ENCODE measurements at regions of chr12 and their contacts with region 1.

Region 1: DNA sequence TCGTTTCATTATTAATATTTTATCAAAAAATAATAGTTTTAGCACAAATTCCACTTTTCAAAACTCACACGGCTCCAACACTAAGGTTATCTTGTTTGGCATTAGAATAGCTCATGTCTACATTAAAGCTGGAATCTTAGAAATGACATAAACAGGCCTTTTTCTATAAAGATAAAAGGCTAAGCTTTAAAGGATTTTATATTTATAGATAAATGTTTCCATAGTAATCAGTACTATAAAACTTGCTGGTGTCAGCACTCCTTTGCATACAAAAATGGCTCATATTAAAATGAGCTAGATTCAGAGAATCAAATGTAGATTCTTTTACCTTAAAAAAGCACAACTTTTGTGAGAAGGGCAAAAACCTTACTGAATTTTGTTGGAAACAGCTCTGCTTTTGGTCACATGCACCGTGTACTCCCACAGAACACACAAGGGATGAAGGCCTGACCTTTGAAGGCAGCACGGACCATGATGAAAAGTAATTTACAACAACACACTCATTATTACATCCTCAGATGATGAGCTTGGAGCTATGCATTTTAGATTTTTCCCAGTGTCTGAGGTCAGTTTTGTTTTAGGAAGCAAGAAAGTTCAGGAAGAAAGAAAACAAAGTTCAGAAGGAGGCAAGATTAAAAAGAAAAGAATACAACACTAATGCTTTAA is 202.8 kb downstream of the BCAT1 start:
- DNase-seq: no peak
- H3K4me3 ChIP-seq: no peak overlapping the region
- CTCF ChIP-seq: no peak
- POLR2A ChIP-seq: no peak

Region 2: DNA sequence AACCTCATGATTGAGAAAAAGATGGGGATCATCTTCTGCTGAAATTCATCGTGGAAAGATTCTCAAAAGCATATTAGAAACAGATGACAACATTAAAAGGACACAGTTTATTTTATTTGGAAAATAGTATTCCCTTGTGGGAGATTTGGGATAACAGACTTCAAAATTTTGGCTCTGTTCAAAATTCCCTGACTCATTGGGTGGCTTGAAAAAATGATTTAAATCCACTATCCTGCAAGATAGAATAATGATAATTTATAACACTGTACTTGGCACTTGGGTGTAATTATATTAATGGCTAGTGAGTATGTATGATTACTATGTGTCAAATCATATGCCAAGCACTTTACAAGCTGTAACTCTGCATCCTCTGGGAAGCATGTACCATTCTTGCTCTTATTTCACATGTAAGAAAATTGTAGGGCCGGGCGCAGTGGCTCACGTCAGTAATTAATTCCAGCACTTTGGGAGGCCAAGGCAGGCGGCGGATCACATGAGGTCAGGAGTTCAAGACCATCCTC is 678.1 kb after region 1 on chr12:
- intact Hi-C with region 1: loop called (anchors 5 kb)
- DNase-seq: no peak
- H3K4me3 ChIP-seq: no peak overlapping the region
- CTCF ChIP-seq: no peak
- POLR2A ChIP-seq: no peak

Measured in lower leg skin (tissue), 4 donors.